ENCODE measurements at regions of chr17 and their contacts with region 1.

Region 1: GRCh38 chr17:15185625-15185991 is 79.5 kb downstream of the PMP22 start:
- DNase-seq: no peak
- H3K4me3 ChIP-seq: no peak overlapping the region
- H3K27ac ChIP-seq: no peak overlapping the region
- H3K4me1 ChIP-seq: no peaks in the 10 kb centered on the region
- H3K27me3 ChIP-seq: no peaks in the 10 kb centered on the region
- CTCF ChIP-seq: no peak

Region 2: GRCh38 chr17:15351925-15352324 is 166.3 kb after region 1 on chr17:
- CTCF ChIA-PET with region 1: no interaction called
- POLR2A ChIA-PET with region 1: no interaction called
- intact Hi-C with region 1: no loop called
- DNase-seq: no peak
- H3K4me3 ChIP-seq: no peak overlapping the region
- H3K27ac ChIP-seq: no peak overlapping the region
- H3K4me1 ChIP-seq: no peaks in the 10 kb centered on the region
- H3K27me3 ChIP-seq: peaks cover 3% of the 10 kb centered on the region
- CTCF ChIP-seq: no peak

Region 3: GRCh38 chr17:15364615-15365014 is 179.0 kb after region 1 on chr17:
- CTCF ChIA-PET with region 1: no interaction called
- POLR2A ChIA-PET with region 1: no interaction called
- intact Hi-C with region 1: no loop called
- DNase-seq: no peak
- H3K4me3 ChIP-seq: no peak overlapping the region
- H3K27ac ChIP-seq: no peak overlapping the region
- H3K4me1 ChIP-seq: no peaks in the 10 kb centered on the region
- H3K27me3 ChIP-seq: peaks cover 3% of the 10 kb centered on the region
- CTCF ChIP-seq: no peak

Region 4: GRCh38 chr17:16342979-16343378 is 1157.4 kb after region 1 on chr17:
- CTCF ChIA-PET with region 1: no interaction called
- POLR2A ChIA-PET with region 1: interaction called, 10 read pairs
- intact Hi-C with region 1: no loop called
- DNase-seq: no peak
- H3K4me3 ChIP-seq: no peak overlapping the region
- H3K27ac ChIP-seq: no peak overlapping the region
- H3K4me1 ChIP-seq: no peaks in the 10 kb centered on the region
- H3K27me3 ChIP-seq: no peaks in the 10 kb centered on the region
- CTCF ChIP-seq: no peak